ENCODE measurements at regions of chr3 and their contacts with region 1.

Region 1: DNA sequence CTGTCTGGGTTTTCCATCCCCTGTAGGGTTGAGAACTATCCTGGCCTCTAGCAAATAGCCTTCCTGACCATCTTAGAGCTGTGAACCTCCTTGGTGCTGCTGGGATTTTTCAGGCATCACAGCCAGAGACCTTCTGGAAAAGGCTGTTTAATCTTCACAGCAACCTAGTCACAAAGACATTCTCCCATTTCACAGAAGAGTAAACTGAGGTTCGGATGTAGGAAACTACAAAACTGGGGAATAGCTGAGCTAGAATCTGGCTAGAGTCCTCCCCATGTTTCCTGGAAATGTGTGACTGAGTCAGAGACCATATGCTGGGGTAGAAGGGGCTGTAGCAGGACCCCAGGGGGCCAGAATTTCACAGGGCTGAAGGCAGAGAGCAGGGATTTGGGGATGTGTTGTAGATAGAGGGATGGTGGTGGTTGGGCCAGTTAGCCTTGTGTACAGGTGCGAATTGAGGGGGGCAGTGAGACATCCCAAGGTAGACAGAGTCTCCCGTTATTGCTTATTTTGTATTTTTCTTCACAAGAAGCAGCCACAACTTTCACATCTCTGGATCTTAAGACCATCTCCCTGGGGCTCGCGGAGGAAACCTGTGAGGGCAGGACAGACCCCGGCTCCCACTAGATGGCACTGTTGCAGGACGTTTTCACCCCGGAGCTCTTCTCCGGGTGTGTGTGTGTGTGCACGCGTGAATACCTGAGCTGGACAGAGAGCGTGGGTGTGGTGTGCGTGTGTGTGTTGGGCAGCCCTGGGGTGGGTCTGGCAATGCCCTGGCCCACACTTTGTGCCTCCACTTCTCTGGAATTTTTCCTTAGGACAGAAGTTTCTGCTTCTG is 66.9 kb upstream of the PRR23C start:
- DNase-seq: peak; percentile 64
- ATAC-seq: peak; percentile 82

Region 2: DNA sequence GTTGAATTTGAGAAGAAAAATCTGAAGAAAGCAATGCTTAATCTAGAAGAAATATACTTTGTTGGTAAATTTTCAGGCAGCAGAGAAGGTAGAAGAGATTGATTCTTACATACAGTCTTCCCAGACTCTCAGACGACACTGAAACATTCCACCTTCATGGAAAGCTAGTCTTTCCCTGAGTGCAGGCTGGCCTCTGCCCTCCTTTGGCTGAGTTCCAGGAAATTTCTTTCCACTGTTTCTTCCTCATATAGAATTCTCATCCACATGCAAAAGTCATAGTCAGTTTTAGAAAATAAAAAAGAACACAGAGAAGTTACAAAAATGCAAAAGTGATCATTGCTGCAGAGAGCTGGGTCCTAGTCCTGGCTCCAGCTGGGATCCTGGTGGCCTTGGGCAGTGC is 75.5 kb after region 1 on chr3:
- intact Hi-C with region 1: no loop called
- DNase-seq: no peak
- ATAC-seq: no peak

Region 3: GRCh38 chr3:139281522-139282196 is 170.0 kb after region 1 on chr3:
- intact Hi-C with region 1: no loop called
- DNase-seq: no peak
- ATAC-seq: peak; percentile 64

Region 4: GRCh38 chr3:139329345-139329850 is 217.8 kb after region 1 on chr3:
- intact Hi-C with region 1: loop called (anchors 5 kb)
- DNase-seq: peak; percentile 90
- ATAC-seq: peak; percentile 97

Measured in left ventricle myocardium superior (tissue), 1 donor.